ENCODE measurements at regions of chr10 and their contacts with region 1.

Region 1: DNA sequence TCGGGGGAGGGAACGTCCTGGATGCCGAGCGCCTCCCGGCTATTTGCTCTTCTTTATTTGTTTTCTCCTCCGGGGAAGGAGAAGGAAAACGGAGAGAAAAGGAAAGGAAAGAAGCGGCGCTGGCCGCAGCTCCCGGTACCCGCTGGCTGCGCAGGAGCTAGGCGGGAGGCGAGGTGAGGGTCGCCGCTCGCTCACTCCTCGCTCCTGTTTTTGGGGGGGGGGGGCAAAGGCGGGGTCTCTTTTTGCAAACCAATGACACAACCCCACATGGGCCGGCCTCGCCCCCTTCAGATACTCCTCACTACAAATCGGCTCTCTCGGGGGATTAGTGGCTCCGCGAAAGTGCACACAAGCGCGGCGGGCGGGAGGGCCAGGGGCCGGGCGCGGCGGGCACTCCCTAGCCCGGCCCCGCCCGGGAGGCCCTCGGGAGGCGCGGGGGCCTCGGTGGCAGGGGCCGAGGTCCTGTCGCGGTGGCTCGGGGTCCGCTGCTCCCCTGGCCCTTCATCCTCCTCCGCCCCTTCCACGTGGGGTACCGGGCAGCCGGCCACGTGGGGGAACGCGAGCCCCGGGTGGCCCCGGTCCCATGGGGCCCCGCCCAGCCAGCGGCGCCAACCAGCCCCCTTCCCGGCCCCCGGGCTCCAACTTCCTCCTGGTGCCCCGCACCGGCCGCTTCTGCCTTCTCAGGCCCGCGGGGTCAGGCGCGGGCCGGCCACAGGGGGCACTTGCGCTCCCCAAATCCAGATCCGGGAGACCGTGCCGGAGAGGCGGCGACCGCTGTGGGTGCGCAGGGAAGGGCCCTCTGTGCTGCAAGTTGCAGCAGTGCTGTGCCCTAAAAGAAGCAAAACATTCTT is 718 bp upstream of the CTBP2 start:
- DNase-seq: peak; percentile 84

Region 2: DNA sequence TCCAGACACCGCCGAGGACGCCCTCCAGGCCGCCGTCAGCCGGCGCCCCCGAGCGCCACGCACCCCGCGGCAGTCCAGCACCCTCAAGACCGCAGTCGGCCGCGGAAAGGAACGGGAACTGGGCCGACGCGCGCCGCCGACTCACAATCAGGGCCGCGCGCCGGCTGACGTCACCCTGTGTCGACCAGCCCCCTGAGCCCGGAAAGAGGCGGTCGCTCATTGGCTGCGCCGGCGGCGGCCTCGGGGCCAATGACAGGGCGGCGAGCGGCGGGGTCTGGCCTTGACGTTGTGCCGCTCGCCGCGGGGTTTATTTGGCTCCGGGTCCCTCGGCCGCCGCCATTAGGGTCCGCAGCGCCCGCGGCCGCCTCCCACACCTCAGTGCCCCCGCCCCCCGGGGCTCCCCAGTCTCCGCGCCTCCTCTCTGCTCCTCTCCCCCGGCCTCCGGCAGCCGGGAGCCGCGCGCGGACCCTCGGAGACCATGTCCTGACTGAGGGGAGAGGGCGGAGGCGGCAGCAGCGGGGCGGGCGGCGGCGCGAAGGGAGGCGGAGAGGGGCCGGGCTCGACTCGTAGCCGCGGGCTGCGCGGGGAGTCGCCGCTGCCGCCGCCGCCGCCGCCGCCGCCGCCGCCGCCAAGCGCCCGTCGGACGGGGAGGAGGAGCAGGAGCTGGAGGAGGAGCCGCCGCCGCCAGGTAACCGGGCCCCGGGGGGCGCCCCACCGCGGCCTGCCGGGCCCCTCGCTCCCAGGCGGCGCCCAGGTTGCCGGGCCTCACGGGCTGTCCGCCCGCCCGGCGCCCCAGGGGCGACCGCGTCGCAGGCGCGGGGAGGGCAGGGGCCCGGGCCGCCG is 244.3 kb before region 1 on chr10:
- intact Hi-C with region 1: loop called (anchors 10 kb)
- DNase-seq: peak; percentile 99

Region 3: DNA sequence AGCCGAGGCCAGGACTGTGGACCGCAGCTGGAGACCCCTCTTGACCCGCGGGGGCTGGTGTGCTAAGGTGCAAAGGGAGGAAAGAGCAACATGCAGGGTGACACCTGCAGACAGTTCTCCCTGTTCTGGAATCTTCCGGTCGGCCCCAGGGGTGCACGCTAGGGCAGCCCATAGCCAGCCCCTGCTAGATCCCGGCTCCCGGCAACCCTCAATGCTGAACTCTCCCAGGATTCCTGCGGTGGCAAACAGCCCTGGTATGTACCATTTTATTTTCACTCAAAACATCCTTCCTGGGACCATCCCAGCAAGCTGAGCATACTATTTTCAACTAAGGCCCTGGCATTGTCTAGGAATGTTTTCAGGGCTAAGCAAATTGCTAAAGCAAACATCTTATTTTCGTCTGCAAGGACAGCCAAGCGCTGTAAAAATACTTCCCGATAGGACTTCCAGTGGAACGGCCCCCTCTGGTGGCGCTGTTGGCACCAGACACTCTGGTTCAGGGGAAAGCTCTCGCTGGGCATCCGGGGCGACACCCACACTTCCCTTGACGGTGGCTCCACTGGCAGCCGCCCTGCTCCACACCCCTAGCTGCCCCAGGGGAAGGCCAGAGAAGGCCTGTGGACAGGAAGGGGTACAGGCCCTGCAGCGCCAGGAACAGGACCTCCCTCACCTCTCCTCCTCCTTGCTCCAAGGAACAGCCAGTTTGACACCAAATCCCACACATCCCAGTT is 100.1 kb before region 1 on chr10:
- intact Hi-C with region 1: loop called (anchors 2 kb)
- DNase-seq: peak; percentile 92

Region 4: GRCh38 chr10:125084191-125084613 is 76.9 kb before region 1 on chr10:
- intact Hi-C with region 1: loop called (anchors 2 kb)
- DNase-seq: no peak

Region 5: DNA sequence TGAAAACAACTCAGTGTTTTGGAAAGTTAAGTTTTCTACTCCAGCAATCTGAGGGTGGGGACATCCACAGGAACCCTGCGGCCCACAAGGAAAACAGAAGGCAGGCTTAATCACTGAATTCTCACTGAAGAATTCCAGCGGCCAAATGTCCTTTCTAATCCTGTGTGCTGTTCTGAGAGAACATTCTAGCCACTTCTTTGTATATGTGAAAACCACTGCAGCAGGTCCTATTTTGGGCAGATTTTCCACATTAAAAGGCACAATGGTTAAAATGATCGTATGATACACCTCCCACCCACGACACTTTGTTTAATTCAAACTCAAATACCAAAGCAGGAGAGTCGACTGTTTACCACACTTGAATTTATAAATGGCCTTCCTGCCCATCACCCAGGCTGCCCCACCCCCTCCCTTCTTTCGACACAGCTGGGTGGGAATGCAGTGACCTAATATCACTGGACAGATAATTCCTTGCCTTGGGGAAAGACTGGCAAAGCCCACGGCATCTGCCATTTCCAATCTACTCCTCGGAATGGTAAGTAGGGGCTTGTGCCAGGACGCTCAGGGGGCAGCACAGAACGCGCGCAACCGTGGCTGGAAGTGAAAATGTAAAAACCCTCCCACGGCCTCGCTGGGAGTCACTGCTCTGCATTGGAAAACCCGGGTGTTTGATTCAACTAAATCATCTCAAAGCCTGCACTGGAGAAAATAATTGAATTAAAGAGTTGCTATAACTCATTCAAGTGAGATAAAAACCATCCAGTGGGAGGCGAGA is 67.7 kb before region 1 on chr10:
- intact Hi-C with region 1: loop called (anchors 2 kb)
- DNase-seq: peak; percentile 82

Region 6: DNA sequence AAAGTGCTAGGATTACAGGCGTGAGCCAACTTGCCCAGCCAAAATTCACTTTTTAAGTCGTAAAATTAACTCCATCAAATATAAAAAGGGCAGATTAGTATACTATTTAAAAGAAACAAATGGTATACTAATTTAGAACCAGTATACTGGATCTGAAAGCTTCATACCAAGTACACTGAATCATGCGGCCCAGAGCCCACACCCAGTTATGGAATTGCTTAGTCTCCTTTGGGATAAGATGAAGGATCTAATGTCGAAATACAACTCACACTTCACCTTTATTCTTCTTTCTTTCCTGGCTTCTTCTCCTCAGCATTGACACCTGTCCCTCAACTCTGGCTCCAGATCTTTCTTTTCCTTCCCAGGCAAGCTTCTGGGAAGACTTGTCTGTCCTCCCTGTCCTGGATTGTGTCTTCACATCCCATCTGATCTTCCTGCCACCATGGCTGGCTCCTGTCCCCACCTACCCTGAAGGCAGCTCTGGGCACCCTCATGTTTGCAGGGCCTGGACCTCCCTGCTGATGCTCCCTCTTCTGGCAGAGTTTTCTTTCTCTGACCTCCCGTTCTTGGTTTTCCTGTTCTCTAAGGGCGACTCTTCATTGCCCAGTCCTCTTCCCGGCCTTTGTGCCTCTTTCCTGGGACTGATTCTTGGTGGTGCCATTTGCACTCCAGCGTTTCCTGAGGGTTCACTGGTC is 57.1 kb after region 1 on chr10:
- intact Hi-C with region 1: no loop called
- DNase-seq: no peak

Region 7: GRCh38 chr10:125231116-125231812 is 70.2 kb after region 1 on chr10:
- intact Hi-C with region 1: no loop called
- DNase-seq: no peak

Region 8: GRCh38 chr10:125337510-125337909 is 176.4 kb after region 1 on chr10:
- intact Hi-C with region 1: loop called (anchors 5 kb)
- DNase-seq: no peak